Posterior cingulate gyrus (tissue), 11 donors: ENCODE measurements at regions of chr18 and their contacts with region 1.

Region 1: GRCh38 chr18:70195852-70196434 is 9.5 kb downstream of the RTTN start:
- DNase-seq: peak in 1 of 10 donors; percentile 19

Region 2: GRCh38 chr18:70454704-70455322 is 258.9 kb after region 1 on chr18:
- intact Hi-C with region 1: loop called (anchors 2 kb)
- DNase-seq: peak in 3 of 10 donors; percentile 24 to 36 (median 25)